ENCODE measurements at regions of chr11 and their contacts with region 1.

Region 1: GRCh38 chr11:75342903-75343870 is 8.3 kb downstream of the ARRB1 start:
- DNase-seq: no peak
- H3K4me3 ChIP-seq: no peak overlapping the region; a peak in 1 of 8 replicates
- H3K27ac ChIP-seq: no peak overlapping the region
- H3K4me1 ChIP-seq: peaks cover 17 to 45% (median 27%) of the 10 kb centered on the region in 4 experiments
- H3K27me3 ChIP-seq: no peaks in the 10 kb centered on the region
- CTCF ChIP-seq: no peak
- EP300 ChIP-seq: peak in 1 of 2 experiments; percentile 46; a peak in 1 of 3 replicates
- POLR2A ChIP-seq: no peak
- RAD21 ChIP-seq: no peak

Region 2: GRCh38 chr11:75323609-75324008 is 19.6 kb before region 1 on chr11:
- CTCF ChIA-PET with region 1: interaction called, 47 read pairs
- POLR2A ChIA-PET with region 1: interaction called, 10 read pairs
- DNase-seq: no peak
- H3K4me3 ChIP-seq: no peak overlapping the region
- H3K27ac ChIP-seq: no peak overlapping the region
- H3K4me1 ChIP-seq: peaks cover 0 to 5% (median 0%) of the 10 kb centered on the region in 4 experiments; a peak in 4 of 7 replicates
- H3K27me3 ChIP-seq: no peaks in the 10 kb centered on the region
- CTCF ChIP-seq: no peak
- EP300 ChIP-seq: no peak
- POLR2A ChIP-seq: no peak
- RAD21 ChIP-seq: no peak

Region 3: GRCh38 chr11:75328426-75329277 is 14.5 kb before region 1 on chr11:
- CTCF ChIA-PET with region 1: interaction called, 47 read pairs
- POLR2A ChIA-PET with region 1: interaction called, 51 read pairs
- DNase-seq: peak in 1 of 2 experiments; percentile 65
- H3K4me3 ChIP-seq: no peak overlapping the region
- H3K27ac ChIP-seq: no peak overlapping the region
- H3K4me1 ChIP-seq: peaks cover 0 to 13% (median 2%) of the 10 kb centered on the region in 4 experiments; a peak in 4 of 7 replicates
- H3K27me3 ChIP-seq: no peaks in the 10 kb centered on the region
- CTCF ChIP-seq: peak; percentile 60 to 77 (median 70)
- EP300 ChIP-seq: no peak
- POLR2A ChIP-seq: no peak
- RAD21 ChIP-seq: peak; percentile 86 to 90

Region 4: DNA sequence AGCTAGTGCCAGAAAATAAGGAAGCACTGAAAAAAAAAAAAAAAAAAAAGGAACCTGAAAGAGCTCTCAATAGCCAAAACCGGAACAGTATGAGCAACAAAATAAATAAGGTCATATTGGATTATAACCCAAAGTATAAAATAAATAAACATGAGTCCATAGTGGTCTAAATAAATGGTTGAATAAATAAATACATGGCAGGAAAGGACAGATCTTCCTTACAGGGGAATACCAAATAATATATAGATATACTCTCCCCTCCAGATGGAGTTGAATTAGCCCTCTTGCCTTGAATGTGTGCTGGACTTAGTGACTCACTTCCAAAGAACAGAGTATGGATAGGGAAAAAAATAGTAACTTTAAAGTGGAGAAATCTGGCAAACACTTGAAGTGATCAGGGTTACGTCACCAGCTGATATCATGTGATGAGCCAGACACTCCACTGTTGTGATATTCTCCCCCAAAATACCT is 22.6 kb after region 1 on chr11:
- CTCF ChIA-PET with region 1: interaction called, 12 read pairs
- POLR2A ChIA-PET with region 1: no interaction called
- DNase-seq: no peak
- H3K4me3 ChIP-seq: no peak overlapping the region
- H3K27ac ChIP-seq: no peak overlapping the region
- H3K4me1 ChIP-seq: no peaks in the 10 kb centered on the region
- H3K27me3 ChIP-seq: no peaks in the 10 kb centered on the region
- CTCF ChIP-seq: no peak
- EP300 ChIP-seq: no peak
- POLR2A ChIP-seq: no peak
- RAD21 ChIP-seq: no peak